Heart right ventricle (tissue), 16 donors: ENCODE measurements at regions of chr4 and their contacts with region 1.

Region 1: GRCh38 chr4:108512615-108513505 is 107.5 kb upstream of the RPL34 start:
- DNase-seq: peak in 1 of 2 donors; percentile 38
- ATAC-seq: peak in 7 of 8 donors; percentile 49 to 86 (median 60)
- H3K4me3 ChIP-seq: no peak overlapping the region
- H3K27ac ChIP-seq: no peak overlapping the region
- H3K4me1 ChIP-seq: peaks cover 0 to 6% (median 0%) of the 10 kb centered on the region in 9 donors
- H3K27me3 ChIP-seq: peaks cover 0 to 36% (median 21%) of the 10 kb centered on the region in 7 donors
- CTCF ChIP-seq: peak in 8 of 9 donors; percentile 12 to 65 (median 52)

Region 2: DNA sequence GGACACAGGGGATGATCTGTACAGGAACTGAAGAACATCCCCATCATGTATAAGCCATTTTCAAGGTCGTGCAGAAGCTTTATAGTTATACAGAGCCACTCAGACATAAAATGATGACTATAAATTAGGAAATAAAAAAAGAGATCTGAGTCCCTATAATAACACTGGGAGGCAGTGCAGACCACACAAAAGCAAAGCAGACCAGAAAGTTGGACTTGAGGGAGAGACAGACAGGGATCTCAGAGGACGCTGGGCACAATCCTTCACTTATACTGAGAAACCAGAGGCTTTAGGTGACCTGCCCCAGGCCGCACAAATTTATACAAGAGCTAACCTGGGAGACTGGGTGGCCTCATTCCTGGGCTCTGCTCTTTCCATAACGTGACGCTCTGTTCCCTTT is 452.7 kb before region 1 on chr4:
- intact Hi-C with region 1: loop called in 1 of 10 experiments (anchors 10 kb)
- DNase-seq: no peak
- ATAC-seq: peak in 6 of 8 donors; percentile 54 to 73 (median 65)
- H3K4me3 ChIP-seq: no peak overlapping the region
- H3K27ac ChIP-seq: no peak overlapping the region
- H3K4me1 ChIP-seq: no peaks in the 10 kb centered on the region
- H3K27me3 ChIP-seq: peaks cover 0 to 26% (median 5%) of the 10 kb centered on the region in 7 donors
- CTCF ChIP-seq: peak in 7 of 9 donors; percentile 24 to 61 (median 55)